Naive thymus-derived CD8-positive, alpha-beta T cell (primary cell): ENCODE measurements at regions of chr13 and their contacts with region 1.

Region 1: DNA sequence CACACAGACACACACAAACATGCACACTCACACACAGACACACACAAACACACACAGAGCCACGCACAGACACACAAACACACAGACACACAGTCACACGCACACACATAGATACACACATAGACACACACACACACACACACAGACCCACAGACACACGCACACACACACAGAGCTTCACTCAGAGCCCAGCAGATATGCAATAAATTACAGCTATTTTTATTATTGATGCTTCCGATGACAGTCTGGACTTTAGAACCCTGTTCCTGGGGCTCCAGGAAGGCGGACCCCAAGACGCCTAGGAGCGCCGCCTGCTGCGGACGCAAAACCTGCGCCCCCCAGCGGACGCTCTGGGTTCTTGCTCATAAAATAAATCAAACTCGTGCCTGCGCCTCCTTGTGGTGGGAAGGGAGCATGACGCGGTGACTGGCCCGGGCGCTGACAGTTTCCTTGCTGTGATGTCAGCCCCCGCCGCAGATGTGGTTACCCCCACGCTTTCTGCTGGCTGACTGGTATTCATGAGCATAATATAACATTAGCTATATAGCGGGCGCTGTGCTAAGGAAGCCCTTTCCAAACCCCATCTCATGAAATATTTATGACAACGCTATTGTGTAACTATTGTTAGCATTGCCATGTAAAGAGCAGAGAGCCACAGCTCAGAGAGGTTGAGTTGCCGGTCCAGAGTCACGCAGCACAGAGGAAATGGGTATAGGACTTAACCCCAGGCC is 64.4 kb upstream of the TM9SF2 start:
- DNase-seq: peak; percentile 90 to 99 (median 94)
- ATAC-seq: peak; percentile 62 to 68
- H3K4me3 Mint-ChIP-seq: peak overlapping the region; percentile 10 to 84 (median 67)
- H3K27ac Mint-ChIP-seq: peak overlapping the region; percentile 75 to 96 (median 92)
- H3K4me1 Mint-ChIP-seq: peaks cover 24 to 64% (median 58%) of the 10 kb centered on the region in 4 donors
- H3K27me3 Mint-ChIP-seq: no peaks in the 10 kb centered on the region

Region 2: DNA sequence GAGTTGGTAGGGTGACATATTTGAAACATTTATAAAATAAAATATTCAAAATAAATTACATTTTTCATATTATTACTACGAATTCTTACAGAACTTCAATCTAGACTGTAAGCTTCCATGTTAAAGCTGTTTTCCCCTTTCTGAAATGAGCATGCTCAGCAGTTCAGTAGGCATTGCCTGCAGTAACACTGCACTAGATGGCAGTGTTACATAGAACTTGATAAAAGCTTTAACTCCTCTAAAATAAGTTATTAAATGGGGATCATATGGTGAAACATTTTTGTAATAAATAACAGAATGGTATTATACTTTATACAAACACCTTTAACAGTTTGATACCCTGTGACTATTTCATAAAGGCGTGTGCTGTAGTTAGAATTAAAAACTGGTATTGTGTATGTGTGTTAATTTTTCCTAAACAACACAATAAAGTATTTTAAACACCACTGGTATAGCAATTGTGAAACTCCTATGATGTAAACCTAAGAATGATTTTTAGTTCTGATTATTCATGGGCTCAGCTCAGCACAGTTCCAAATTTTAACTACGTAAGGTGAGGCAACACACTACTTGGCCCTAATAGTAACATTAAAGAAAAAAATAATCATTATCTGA is 167.1 kb before region 1 on chr13:
- POLR2A ChIA-PET with region 1: interaction called, 42 read pairs
- DNase-seq: peak in 4 of 10 donors; percentile 45 to 67 (median 56)
- ATAC-seq: peak; percentile 58 to 78
- H3K4me3 Mint-ChIP-seq: no peak overlapping the region
- H3K27ac Mint-ChIP-seq: peak overlapping the region; percentile 9 to 97 (median 78)
- H3K4me1 Mint-ChIP-seq: peaks cover 37 to 65% (median 64%) of the 10 kb centered on the region in 4 donors
- H3K27me3 Mint-ChIP-seq: no peaks in the 10 kb centered on the region

Region 3: DNA sequence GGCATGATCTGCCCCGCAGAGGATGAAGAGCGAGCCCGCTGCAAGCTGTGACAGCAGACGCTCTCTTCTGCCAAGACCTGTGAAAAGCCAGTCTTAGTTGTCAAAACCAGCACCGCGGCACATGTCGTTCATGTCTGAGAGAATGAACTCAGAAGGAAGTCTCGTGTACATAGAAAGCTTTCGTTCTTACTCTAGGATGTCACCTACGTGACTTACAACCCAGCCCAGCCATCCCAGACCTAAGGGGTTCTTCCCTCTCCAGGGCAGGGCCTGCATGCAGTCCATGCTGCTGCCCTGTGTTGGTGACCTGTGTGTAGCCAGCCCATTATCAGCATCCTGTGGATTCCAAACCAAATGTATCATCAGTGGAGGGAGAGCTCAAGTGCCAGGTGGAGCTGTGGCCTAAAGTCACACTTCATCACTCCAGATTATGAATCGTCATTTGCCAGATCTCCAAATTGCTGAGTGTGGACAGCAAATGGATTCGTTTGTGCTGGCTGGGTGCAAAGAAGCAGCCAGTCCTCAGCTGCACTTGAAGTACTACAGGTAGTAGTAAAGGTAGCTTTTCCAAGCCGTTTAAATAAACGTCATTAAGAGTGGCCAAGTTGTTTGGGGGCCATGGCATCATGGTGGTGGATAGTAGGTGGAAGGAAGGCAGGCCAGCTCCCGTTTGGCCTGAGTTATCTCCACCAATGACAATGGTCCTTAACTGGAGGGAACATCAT is 55.8 kb before region 1 on chr13:
- POLR2A ChIA-PET with region 1: interaction called, 46 read pairs
- DNase-seq: peak in 6 of 10 donors; percentile 53 to 67 (median 60)
- ATAC-seq: peak; percentile 26 to 36
- H3K4me3 Mint-ChIP-seq: peak overlapping the region; percentile 20 to 84 (median 76)
- H3K27ac Mint-ChIP-seq: peak overlapping the region; percentile 96 to 100 (median 98)
- H3K4me1 Mint-ChIP-seq: peaks cover 49 to 97% (median 91%) of the 10 kb centered on the region in 4 donors
- H3K27me3 Mint-ChIP-seq: no peaks in the 10 kb centered on the region

Region 4: DNA sequence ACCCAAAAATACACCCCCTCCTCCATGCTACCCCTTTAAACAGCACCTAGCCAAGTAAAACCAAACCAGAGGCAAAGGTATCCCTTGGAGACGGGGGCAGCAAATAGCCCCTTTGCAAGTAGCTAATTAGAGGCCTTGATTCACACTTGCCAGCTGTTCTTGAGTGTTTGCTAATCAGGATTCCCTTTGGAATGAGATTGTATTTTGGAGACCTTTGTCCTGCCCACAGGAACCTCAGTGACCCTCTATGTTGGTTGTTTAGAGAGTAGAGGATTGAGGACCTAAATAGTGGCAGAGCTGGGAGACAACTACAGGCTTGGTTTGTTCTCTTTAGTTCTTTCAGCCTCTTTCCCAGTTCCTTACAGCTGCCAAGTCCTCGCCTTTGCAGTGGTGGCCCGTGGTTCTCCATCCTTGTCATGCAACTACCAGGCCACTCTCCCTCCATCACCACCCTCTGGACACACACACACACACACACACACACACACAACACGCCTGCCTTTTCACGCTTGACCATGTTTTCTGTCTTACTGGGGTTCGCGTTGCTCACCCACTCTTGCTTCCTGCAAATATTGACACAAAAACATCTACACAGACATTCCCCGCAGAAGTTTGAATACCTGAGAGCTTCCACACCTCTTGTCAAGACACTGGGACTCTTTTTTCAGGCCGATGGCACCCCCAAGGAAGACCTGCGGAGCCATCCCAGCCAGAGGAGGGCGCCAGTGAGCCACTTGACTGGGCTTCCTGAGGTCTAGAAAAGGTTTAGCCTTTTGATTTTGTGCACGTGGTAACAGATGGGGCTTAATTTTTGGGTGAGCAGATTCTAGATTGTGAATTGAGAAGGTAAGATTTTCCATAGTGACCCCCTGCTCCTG is 49.7 kb before region 1 on chr13:
- POLR2A ChIA-PET with region 1: interaction called, 46 read pairs
- DNase-seq: peak; percentile 73 to 91 (median 87)
- ATAC-seq: peak; percentile 15 to 20
- H3K4me3 Mint-ChIP-seq: peak overlapping the region in 9 of 10 donors; percentile 29 to 83 (median 57)
- H3K27ac Mint-ChIP-seq: peak overlapping the region; percentile 96 to 100 (median 98)
- H3K4me1 Mint-ChIP-seq: peaks cover 33 to 74% (median 67%) of the 10 kb centered on the region in 4 donors
- H3K27me3 Mint-ChIP-seq: no peaks in the 10 kb centered on the region

Region 5: DNA sequence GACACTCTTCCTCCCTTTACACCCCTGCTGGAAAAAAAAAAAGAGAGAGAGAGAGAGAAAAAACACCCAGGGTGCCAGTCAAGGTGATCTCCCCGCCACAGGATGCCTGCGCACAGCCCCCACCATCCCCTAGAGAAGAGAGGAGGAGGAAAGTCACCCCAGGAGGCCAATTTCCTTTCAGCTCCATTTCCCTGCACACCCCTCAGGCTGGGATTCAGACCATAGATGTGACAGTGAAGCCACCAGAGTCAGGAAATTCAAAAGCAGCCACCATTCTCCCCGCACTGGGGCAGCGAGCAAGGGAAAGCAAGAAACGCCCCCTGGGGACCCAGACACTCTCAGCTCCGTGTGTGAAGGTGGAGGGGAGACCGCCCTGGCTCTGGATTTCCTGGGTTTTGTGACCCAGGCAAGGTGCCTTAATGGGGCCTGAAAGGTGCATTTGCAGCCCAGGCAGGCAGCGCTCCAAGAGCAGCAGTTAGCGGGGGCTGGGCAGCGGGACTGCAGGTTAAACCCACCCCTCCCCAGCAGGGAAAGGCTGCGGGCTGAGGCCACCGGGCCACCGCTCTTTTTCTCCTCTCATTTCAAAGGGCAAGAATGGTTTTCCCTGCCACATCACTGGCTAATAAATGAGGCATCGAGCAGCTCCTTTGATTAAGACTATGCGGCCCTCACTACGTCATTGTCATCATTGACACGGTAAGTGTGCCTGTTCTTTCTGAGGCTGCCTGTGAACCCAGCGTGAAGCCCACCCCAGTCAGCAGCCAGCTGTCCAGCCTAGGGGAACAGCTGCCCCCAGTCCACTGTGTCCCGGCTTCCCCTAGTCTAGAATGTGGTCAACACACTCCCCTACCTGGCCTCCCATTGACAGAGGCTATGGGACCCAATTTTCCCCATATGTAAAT is 19.4 kb before region 1 on chr13:
- POLR2A ChIA-PET with region 1: interaction called, 60 read pairs
- DNase-seq: peak in 7 of 10 donors; percentile 43 to 74 (median 58)
- ATAC-seq: peak; percentile 14 to 43
- H3K4me3 Mint-ChIP-seq: peak overlapping the region in 2 of 10 donors; percentile 42 to 44
- H3K27ac Mint-ChIP-seq: no peak overlapping the region
- H3K4me1 Mint-ChIP-seq: peaks cover 30 to 67% (median 35%) of the 10 kb centered on the region in 4 donors
- H3K27me3 Mint-ChIP-seq: no peaks in the 10 kb centered on the region

Region 6: GRCh38 chr13:99425485-99426341 is 11.1 kb before region 1 on chr13:
- POLR2A ChIA-PET with region 1: interaction called, 60 read pairs
- DNase-seq: peak in 9 of 10 donors; percentile 37 to 82 (median 50)
- ATAC-seq: peak; percentile 67 to 74
- H3K4me3 Mint-ChIP-seq: peak overlapping the region; percentile 56 to 83 (median 77)
- H3K27ac Mint-ChIP-seq: peak overlapping the region; percentile 88 to 98 (median 94)
- H3K4me1 Mint-ChIP-seq: peaks cover 41 to 66% (median 64%) of the 10 kb centered on the region in 4 donors
- H3K27me3 Mint-ChIP-seq: no peaks in the 10 kb centered on the region

Region 7: DNA sequence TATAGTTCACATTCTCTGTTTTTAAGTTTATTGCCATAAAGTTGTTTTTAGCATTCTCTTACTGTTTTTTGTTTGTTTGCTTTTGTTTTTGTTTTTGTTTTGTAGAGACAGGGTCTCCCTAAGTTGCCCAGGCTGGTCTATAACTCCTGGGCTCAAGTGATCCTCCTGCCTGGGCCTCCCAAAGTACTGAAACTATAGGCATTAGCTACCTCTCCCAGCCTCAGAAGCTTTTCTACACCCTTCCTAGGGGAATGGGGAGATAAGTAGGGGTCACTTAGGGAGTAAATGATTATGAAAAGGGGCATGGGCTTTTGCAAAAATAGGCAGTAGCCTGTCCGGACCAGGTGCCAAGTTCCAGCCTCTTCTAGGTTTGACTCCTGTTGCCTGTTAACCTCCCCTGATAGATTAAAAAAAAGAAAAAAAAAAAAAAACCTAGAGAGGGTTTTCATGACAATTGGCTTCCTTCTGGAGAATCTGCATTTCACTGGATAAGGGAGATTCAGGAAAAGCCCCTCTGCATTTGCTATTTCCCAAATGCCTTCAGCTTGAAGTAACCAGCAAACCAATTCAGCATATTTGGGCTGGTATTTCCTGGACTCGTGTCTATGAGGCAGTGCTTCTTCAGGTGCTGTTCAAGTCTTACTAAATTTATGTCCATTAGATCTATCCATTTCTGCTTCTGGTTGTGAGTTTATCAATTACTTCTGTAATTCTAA is 281.3 kb after region 1 on chr13:
- POLR2A ChIA-PET with region 1: no interaction called
- DNase-seq: no peak
- ATAC-seq: no peak
- H3K4me3 Mint-ChIP-seq: no peak overlapping the region
- H3K27ac Mint-ChIP-seq: peak overlapping the region in 1 of 10 donors; percentile 43
- H3K4me1 Mint-ChIP-seq: peaks cover 0 to 11% (median 5%) of the 10 kb centered on the region in 4 donors
- H3K27me3 Mint-ChIP-seq: no peaks in the 10 kb centered on the region